ENCODE measurements at regions of chr6 and their contacts with region 1.

Region 1: DNA sequence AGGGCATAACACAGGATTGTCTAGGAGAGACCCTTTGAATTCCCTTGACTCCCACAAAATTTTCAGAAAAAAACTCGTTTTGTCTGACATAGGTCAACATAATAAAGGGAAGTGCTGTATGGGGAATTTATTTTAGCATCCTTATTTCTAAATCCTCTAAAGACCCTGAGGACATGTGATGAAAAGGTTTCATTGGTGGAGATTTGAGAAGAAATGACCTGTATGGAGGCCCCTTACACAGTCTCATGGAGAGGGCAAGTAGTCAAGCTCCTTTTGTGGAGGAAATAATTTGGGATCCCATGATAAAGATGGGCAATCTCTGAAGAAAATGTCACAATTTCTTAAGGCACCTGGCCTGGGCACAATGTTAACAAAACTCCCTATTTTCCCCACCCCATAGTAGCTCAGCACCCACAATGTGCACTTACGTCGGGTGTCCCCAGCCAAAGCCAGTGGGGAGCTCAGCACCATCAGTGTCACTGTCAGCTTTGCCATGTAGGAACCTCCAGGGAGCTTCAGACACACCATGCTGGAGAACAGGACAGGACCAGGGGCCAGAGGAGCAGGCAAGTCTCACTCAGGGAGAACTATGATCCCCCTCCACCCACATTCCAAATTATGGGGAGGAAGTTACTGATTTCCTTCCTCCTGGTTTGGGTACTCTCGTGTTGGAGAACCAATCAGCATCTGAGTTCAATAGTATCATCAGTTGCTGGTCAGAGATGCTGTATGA is at the start of gene HLA-DRB5:
- DNase-seq: peak in 1 of 2 donors; percentile 55
- H3K4me3 ChIP-seq: peak within 1 kb of the TSS in 1 of 2 donors; percentile 10
- H3K27ac ChIP-seq: no peak within 1 kb of the TSS
- H3K4me1 ChIP-seq: no peaks in the 10 kb centered on the region
- H3K27me3 ChIP-seq: no peaks in the 10 kb centered on the region
- CTCF ChIP-seq: no peak
- total RNA-seq, gene HLA-DRB5: 19.9 TPM

Region 2: DNA sequence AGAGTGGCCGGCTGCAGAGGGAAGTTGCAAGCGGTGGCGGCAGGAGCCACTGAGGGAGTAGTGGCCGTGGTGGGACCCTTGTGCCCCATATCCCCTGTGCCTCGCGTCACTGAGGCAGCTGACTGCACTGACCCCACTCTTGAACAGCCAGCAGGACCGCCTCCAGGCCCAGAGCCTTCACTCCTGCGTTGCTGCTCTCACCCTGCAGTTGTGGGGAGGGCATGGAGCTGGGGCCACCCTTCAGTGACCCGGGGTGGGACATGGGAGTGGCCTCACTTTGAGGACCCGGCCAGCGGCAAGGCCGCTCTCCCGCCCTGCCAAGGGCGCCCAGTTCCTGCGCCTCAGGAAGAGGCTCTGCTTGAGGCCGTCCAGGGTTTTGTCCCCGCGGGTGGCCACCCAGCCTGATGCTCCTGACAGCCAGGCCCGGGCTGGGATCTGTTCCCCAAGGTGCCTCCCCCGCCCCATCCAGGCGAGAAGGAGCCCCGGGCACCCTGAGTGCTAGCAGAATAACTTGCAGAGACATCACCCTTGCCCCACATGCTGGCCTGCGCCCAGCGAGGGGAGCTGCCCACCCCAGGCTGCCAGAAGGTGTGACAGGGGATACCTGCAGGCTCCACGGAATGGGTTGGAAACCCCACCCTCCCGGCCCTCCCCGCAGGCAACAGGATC is 45.8 kb before region 1 on chr6:
- intact Hi-C with region 1: loop called (anchors 10 kb)
- DNase-seq: no peak
- H3K4me3 ChIP-seq: no peak overlapping the region
- H3K27ac ChIP-seq: no peak overlapping the region
- H3K4me1 ChIP-seq: no peaks in the 10 kb centered on the region
- H3K27me3 ChIP-seq: no peaks in the 10 kb centered on the region
- CTCF ChIP-seq: no peak

Region 3: DNA sequence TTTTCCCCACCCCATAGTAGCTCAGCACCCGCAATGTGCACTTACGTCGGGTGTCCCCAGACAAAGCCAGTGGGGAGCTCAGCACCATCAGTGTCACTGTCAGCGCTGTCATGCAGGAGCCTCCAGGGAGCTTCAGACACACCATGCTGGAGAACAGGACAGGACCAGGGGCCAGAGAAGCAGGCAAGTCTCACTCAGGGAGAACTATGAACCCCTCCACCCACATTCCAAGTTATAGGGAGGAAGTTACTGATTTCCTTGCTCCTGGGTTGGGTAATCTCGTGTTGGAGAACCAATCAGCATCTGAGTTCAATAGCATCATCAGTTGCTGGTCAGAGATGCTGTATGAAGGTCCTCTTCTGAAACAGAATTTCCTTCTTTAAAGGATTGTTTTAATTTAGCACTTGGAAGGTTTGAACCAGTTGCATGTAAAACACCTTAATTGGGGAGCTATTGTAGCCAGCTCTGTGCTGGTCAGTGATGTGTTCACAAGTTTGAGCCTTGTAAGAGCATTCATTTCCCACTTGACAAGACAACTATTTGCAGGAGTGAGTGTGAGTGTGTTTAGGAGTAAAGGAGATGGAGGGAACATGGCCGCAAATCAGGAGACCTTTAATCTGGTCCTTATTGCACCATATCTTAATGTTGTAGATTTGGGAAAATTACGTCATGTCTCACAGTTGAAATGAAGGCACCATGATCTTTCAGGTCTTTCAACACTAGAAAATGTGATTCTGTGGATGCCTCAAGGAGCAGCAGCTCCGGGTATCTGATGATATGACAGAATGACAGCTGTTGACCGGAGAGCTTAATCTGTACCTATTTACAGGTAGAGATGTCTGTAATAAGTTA is 60.0 kb after region 1 on chr6 and contains the start of gene HLA-DRB1:
- intact Hi-C with region 1: loop called (anchors 5 kb)
- DNase-seq: no peak
- H3K4me3 ChIP-seq: peak within 1 kb of the TSS in 1 of 2 donors; percentile 42
- H3K27ac ChIP-seq: no peak within 1 kb of the TSS
- H3K4me1 ChIP-seq: no peaks in the 10 kb centered on the region
- H3K27me3 ChIP-seq: no peaks in the 10 kb centered on the region
- CTCF ChIP-seq: no peak
- total RNA-seq, gene HLA-DRB1: 82.5 TPM

Region 4: DNA sequence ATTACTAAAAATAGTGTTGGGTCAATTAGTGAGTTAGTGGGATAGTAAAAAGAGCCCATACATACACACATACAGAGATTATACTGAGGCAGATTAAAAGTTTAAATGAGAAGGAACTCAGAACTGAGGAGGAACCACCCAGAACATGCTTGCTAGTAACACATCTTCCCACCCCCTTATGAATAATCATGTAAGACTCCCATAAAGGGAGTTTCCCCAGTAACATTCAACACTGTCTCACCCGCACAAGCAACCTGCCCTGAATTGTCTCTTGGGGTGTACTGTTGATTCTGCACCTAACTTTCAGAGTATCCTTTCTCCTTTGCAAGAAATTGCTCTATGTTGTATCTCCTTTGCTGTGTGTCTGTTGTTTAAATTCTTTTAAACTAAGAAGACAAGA is 244.6 kb after region 1 on chr6:
- intact Hi-C with region 1: no loop called
- DNase-seq: no peak
- H3K4me3 ChIP-seq: no peak overlapping the region
- H3K27ac ChIP-seq: no peak overlapping the region
- H3K4me1 ChIP-seq: no peaks in the 10 kb centered on the region
- H3K27me3 ChIP-seq: no peaks in the 10 kb centered on the region
- CTCF ChIP-seq: no peak

Region 5: GRCh38 chr6:33392979-33393378 is 863.1 kb after region 1 on chr6:
- intact Hi-C with region 1: no loop called
- DNase-seq: no peak
- H3K4me3 ChIP-seq: no peak overlapping the region
- H3K27ac ChIP-seq: no peak overlapping the region
- H3K4me1 ChIP-seq: peaks cover 3 to 6% of the 10 kb centered on the region in 2 donors
- H3K27me3 ChIP-seq: no peaks in the 10 kb centered on the region
- CTCF ChIP-seq: no peak

Measured in ascending aorta (tissue), 2 donors.